Left ventricle myocardium superior (tissue), 1 donor: ENCODE measurements at regions of chr17 and their contacts with region 1.

Region 1: GRCh38 chr17:45705123-45706009 is 78.8 kb upstream of the CRHR1 start:
- DNase-seq: no peak
- ATAC-seq: no peak

Region 2: GRCh38 chr17:45759761-45760160 is 54.4 kb after region 1 on chr17:
- intact Hi-C with region 1: loop called (anchors 10 kb)
- DNase-seq: no peak
- ATAC-seq: no peak

Region 3: DNA sequence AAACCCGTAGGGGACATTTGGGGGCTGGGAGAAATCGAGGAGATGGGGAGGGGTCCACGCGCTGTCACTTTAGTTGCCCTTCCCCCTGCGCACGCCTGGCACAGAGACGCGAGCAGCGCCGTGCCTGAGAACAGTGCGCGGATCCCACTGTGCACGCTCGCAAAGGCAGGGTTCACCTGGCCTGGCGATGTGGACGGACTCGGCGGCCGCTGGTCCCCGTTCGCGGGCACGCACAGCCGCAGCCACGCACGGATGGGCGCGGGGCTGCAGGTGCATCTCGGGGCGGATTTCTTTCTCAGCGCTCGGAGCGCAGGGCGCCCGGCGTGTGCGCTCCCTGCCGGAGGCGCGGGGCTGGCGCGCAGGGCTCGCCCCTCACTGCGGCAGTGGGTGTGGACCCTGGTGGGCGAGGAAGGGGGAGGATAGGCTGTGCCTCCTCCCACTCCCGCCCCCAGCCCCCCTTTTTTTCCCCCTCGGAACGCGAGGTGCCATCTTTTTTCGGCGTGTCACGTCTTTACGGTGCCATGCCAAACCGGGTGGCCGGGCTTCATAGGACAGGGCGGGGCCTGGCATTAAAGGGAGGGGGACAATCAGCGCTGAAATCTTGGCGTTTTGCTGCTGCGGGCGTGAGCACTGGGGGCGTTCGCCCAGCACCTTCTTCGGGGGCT is 190.1 kb after region 1 on chr17:
- intact Hi-C with region 1: no loop called
- DNase-seq: peak; percentile 44
- ATAC-seq: peak; percentile 10